ENCODE measurements at regions of chr2 and their contacts with region 1.

Region 1: DNA sequence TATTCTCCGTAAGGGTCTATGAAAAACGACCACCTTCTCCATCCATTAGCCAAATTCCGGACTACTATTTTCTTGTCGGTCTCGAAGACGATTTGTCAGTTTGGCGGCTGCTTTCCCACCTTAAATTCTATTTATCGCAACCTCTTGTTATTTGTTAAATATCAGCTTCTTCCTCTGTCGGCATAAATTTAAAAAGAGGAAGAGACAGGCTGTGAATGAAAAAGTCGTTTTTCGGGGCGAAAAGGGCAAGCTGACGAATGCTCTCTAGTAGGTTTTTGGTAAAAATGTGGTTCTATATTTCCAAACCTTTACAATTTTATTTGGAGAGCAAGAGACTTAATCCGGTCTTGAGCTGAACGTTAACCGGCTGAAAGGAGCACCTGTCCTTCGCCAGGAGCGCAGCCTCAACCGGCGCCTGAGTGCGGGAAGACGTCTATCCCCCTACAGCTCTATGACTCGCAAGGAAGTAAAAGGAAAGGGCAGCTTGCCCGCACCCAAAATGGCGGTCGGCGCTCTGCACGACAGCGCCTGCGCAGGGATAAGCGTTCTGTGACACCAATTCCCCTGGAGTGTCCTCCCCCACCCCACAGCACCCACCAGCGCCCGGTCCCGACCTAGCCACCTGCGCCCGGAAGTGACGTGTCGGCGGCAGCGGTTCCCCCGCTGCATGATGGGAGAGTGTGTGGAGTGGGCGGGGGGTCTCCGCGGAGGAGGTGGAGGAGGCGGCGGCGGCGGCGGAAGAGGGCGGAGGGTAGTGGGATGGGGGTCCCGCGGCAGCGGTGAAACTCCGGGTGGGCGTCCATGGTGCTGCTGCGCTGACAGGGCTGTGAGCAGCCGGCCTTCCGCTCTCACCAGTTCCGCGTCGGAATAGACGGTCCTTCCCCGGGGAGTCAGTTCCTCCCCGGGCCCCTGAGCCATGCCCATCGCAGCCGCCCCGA is at the start of gene AFTPH:
- DNase-seq: peak; percentile 96 to 100 (median 99)
- ATAC-seq: peak; percentile 98
- H3K4me3 ChIP-seq: peak within 1 kb of the TSS; percentile 99
- H3K4me3 Mint-ChIP-seq: peak within 1 kb of the TSS; percentile 94 to 100 (median 99)
- H3K27ac ChIP-seq: peak within 1 kb of the TSS; percentile 85
- H3K27ac Mint-ChIP-seq: peak within 1 kb of the TSS; percentile 93 to 99 (median 99)
- H3K4me1 ChIP-seq: peaks cover 22 to 25% of the 10 kb centered on the region in 2 donors
- H3K4me1 Mint-ChIP-seq: peaks cover 10 to 51% (median 43%) of the 10 kb centered on the region in 7 donors
- H3K27me3 ChIP-seq: no peaks in the 10 kb centered on the region
- H3K27me3 Mint-ChIP-seq: peaks cover 0 to 12% (median 0%) of the 10 kb centered on the region in 5 donors
- total RNA-seq, gene AFTPH: 25.2 to 46.2 (median 37.0) TPM

Region 2: DNA sequence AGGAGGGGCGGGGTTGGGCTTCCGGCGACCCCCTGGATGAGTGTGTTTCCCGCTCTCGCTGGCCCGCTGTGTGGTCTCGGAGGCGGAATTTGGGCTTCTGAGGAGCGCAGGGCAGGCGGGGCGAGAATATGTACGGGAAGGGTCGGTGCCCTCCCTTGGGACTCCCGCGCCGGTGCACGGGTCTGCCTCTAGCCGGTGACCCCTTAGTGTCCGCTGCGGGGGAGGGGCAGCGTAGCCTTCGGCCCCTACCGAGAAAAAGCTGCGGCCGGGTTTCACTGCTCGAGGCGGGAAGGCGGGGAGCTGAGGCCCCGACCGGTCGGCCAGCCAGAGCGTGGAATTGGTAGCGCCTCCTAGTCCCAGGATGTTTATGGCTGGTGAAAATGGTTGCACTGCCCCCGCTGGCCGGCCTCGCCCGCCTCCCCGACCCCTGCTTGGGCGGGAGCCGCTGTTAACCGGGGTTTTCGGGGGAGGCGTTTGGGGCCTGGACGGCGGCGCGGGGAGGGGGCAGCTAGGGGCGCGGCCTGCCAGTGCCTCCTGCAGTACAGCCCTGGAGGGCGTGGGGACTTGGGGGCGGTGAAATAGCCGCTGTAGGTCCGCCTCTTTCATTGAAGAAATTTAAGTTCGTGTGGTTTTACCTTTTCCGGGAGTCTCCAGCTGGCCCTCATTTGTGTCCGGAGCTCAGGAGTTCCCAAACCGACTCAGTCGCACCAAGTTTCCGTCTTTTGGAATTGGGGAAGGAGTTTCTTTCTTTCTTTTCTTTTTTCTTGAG is 682.5 kb before region 1 on chr2 and contains the start of gene UGP2:
- CTCF ChIA-PET with region 1: no interaction called
- POLR2A ChIA-PET with region 1: no interaction called
- intact Hi-C with region 1: loop called in 1 of 2 experiments (anchors 1 kb)
- DNase-seq: peak; percentile 68 to 89 (median 83)
- ATAC-seq: peak; percentile 77
- H3K4me3 ChIP-seq: peak within 1 kb of the TSS; percentile 82
- H3K4me3 Mint-ChIP-seq: peak within 1 kb of the TSS; percentile 97 to 100 (median 99)
- H3K27ac ChIP-seq: peak within 1 kb of the TSS; percentile 90
- H3K27ac Mint-ChIP-seq: peak within 1 kb of the TSS; percentile 95 to 99 (median 97)
- H3K4me1 ChIP-seq: peaks cover 5 to 24% of the 10 kb centered on the region in 2 donors
- H3K4me1 Mint-ChIP-seq: peaks cover 27 to 60% (median 53%) of the 10 kb centered on the region in 7 donors
- H3K27me3 ChIP-seq: no peaks in the 10 kb centered on the region
- H3K27me3 Mint-ChIP-seq: peaks cover 0 to 14% (median 0%) of the 10 kb centered on the region in 5 donors
- total RNA-seq, gene UGP2: 69.5 to 134 (median 92.4) TPM

Region 3: DNA sequence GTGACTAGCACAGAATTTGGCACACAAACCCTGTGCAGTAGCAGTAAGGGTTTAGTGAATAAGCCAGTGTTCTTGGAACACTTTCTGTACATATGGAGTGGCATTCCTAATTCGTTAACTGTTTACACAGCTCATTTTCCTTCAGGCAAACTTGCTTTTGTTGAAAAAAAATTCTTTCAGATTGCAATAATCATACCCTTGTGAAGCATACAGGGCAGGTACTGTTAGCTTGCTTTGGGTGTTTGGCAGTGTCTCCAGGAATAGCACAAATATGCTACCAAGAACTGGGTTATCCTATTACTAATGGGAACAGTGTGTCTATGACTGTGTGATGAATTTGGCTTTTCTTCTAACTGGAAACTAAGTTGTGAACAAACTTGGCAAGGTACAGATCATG is 648.8 kb before region 1 on chr2:
- CTCF ChIA-PET with region 1: no interaction called
- POLR2A ChIA-PET with region 1: no interaction called
- intact Hi-C with region 1: no loop called
- DNase-seq: no peak
- ATAC-seq: no peak
- H3K4me3 ChIP-seq: no peak overlapping the region
- H3K4me3 Mint-ChIP-seq: no peak overlapping the region
- H3K27ac ChIP-seq: no peak overlapping the region
- H3K27ac Mint-ChIP-seq: peak overlapping the region in 5 of 9 donors; percentile 5 to 74 (median 26)
- H3K4me1 ChIP-seq: no peaks in the 10 kb centered on the region
- H3K4me1 Mint-ChIP-seq: peaks cover 17 to 70% (median 54%) of the 10 kb centered on the region in 7 donors
- H3K27me3 ChIP-seq: no peaks in the 10 kb centered on the region
- H3K27me3 Mint-ChIP-seq: no peaks in the 10 kb centered on the region

Region 4: GRCh38 chr2:64538764-64539433 is 15.0 kb after region 1 on chr2:
- CTCF ChIA-PET with region 1: interaction called, 4 read pairs
- POLR2A ChIA-PET with region 1: interaction called, 5 read pairs
- intact Hi-C with region 1: loop called (anchors 1 to 2 kb)
- DNase-seq: no peak
- ATAC-seq: no peak
- H3K4me3 ChIP-seq: no peak overlapping the region
- H3K4me3 Mint-ChIP-seq: no peak overlapping the region
- H3K27ac ChIP-seq: no peak overlapping the region
- H3K27ac Mint-ChIP-seq: no peak overlapping the region
- H3K4me1 ChIP-seq: peaks cover 4 to 12% of the 10 kb centered on the region in 2 donors
- H3K4me1 Mint-ChIP-seq: peaks cover 36 to 88% (median 68%) of the 10 kb centered on the region in 7 donors
- H3K27me3 ChIP-seq: no peaks in the 10 kb centered on the region
- H3K27me3 Mint-ChIP-seq: no peaks in the 10 kb centered on the region

Region 5: DNA sequence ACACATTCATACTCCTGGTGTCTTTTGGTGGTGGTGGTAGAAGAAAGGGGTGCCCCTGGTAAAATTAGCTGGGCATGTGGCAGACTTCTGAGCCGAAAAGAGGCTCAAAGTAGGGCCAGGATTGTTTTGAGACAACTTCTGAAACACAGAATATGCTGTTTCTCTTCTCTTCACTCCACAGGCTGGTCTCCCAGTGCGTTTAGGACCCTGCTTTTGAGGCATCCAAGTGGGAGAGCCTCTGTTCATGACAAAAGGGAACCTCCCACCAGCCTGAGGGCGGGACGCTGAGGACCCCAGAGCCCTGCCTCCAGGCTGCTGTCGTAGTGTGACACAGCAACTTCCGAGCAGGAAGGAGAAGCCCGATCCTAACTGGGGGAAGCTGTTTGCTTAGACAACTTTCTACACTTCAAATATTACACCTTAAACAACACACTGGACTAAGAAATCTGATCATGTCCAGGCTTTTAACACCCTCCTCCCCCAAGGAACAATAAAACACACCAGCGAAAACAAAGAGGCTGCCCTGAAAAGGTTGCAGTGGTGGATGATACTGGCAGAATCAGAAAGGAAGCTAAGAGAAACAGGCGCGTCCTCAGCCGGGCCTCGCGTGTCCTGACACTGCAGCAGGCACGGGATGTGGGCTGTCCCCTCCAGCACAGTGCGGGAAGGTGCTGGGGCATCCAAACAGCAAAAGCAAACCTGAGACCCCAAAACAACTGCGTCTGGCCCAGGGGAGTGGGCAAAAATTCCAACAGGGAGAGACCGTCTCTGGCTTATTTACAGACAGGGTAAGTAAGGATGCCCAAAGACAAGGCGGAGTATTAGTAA is 120.5 kb after region 1 on chr2:
- CTCF ChIA-PET with region 1: interaction called, 16 read pairs
- POLR2A ChIA-PET with region 1: interaction called, 3 read pairs
- intact Hi-C with region 1: loop called (anchors 1 to 2 kb)
- DNase-seq: peak in 8 of 9 donors; percentile 48 to 57 (median 53)
- ATAC-seq: peak; percentile 79
- H3K4me3 ChIP-seq: peak overlapping the region; percentile 62
- H3K4me3 Mint-ChIP-seq: peak overlapping the region; percentile 80 to 93 (median 90)
- H3K27ac ChIP-seq: peak overlapping the region; percentile 52
- H3K27ac Mint-ChIP-seq: peak overlapping the region; percentile 34 to 94 (median 88)
- H3K4me1 ChIP-seq: peaks cover 4 to 72% of the 10 kb centered on the region in 2 donors
- H3K4me1 Mint-ChIP-seq: peaks cover 45 to 100% (median 89%) of the 10 kb centered on the region in 7 donors
- H3K27me3 ChIP-seq: no peaks in the 10 kb centered on the region
- H3K27me3 Mint-ChIP-seq: no peaks in the 10 kb centered on the region

Region 6: DNA sequence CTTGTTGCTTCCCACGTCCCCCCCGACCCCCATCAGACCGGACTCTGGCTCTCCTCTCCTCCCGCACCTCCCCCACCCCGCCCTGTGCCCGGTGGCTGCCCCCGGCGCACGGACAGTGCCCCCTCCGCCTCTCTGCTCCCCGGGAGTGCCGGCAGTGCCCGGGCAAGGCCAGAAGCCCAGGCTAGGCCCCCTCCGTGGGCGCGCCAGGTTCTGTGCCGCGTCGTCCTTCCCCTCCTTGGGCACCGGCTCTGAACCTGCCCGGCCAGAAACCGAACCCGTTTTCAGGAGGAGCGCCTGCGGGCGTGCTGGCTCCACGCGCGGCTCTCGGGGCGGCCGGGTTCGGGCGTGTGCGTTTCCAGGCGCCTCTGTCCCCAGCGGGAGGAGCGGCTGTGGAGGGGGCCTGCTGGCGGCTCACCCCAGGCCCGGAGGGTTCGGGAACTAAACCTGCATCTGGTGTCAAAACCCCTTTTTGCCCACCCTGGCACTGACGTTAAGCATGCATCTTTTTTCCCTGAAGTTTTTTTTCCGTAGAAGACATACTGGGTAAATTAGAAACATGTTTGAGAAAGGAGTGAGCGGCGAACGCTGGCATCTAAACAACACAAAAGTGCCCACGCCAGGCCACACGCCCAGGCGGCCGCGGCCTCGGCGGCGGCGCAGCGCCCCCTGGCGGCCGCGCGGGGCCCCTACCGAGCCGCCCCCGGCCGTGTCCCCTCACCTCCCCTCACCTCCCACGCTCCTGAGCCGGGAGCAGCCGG is 341.3 kb after region 1 on chr2:
- CTCF ChIA-PET with region 1: interaction called, 18 read pairs
- POLR2A ChIA-PET with region 1: no interaction called
- intact Hi-C with region 1: loop called (anchors 1 kb)
- DNase-seq: peak; percentile 30 to 82 (median 72)
- ATAC-seq: peak; percentile 87
- H3K4me3 ChIP-seq: peak overlapping the region; percentile 88
- H3K4me3 Mint-ChIP-seq: peak overlapping the region in 7 of 10 donors; percentile 72 to 86 (median 81)
- H3K27ac ChIP-seq: peak overlapping the region; percentile 40
- H3K27ac Mint-ChIP-seq: no peak overlapping the region
- H3K4me1 ChIP-seq: peaks cover 0 to 5% of the 10 kb centered on the region in 2 donors
- H3K4me1 Mint-ChIP-seq: peaks cover 0 to 5% (median 0%) of the 10 kb centered on the region in 7 donors
- H3K27me3 ChIP-seq: peaks cover 0 to 3% of the 10 kb centered on the region in 2 donors
- H3K27me3 Mint-ChIP-seq: peaks cover 0 to 17% (median 8%) of the 10 kb centered on the region in 5 donors

Region 7: DNA sequence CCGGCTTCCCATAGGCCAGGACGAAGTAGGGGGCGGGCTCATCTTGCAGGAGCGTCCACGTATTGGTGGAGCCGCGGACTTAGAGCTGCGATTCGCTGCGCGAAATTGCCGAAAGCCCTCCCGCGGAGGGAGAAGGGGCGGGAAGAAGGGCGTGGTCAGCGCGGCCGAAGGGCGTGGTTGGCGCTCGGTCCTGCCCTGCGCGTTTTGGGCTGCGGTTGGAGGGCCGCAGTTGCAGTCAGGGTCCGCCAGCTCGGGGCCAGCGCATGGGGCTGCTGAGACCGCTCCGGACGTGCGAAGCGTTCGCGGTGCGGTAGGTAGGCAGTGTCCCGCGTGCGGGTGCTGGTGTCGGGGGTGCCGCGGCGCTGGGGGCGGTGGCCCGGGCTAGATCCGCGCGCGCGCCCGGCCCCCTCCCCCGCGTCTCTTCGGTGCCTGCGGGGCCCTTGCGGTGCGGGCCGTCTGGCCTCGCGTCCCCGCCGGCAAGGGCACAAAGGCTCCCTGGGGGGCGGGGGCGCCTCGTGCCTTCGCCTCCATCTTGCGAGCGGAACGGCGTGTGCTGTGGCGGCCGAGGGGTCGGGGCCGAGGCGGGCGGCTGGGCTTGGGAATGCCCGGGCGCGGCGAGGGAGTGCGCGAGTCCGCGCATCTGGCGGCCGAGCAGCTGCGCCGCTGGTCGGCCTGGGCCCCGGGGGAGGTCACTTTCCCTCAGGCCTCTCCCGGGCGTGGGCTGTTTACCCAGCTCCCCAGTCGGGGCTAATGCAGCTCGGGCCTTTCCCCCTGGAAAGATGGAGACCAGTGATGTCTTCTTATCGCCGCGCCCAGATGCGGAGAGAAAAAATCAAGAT is 532.5 kb after region 1 on chr2 and contains the start of gene CEP68:
- CTCF ChIA-PET with region 1: no interaction called
- POLR2A ChIA-PET with region 1: interaction called, 3 read pairs
- intact Hi-C with region 1: loop called (anchors 1 kb)
- DNase-seq: peak; percentile 88 to 96 (median 95)
- ATAC-seq: peak; percentile 96
- H3K4me3 ChIP-seq: peak within 1 kb of the TSS; percentile 54
- H3K4me3 Mint-ChIP-seq: peak within 1 kb of the TSS; percentile 79 to 99 (median 94)
- H3K27ac ChIP-seq: peak within 1 kb of the TSS; percentile 76
- H3K27ac Mint-ChIP-seq: peak within 1 kb of the TSS; percentile 84 to 97 (median 90)
- H3K4me1 ChIP-seq: peaks cover 10 to 42% of the 10 kb centered on the region in 2 donors
- H3K4me1 Mint-ChIP-seq: peaks cover 41 to 81% (median 61%) of the 10 kb centered on the region in 7 donors
- H3K27me3 ChIP-seq: no peaks in the 10 kb centered on the region
- H3K27me3 Mint-ChIP-seq: peaks cover 0 to 2% (median 0%) of the 10 kb centered on the region in 5 donors
- total RNA-seq, gene CEP68: 8.5 to 52.0 (median 20.8) TPM

Region 8: GRCh38 chr2:65576861-65577601 is 1053.1 kb after region 1 on chr2:
- CTCF ChIA-PET with region 1: interaction called, 4 read pairs
- POLR2A ChIA-PET with region 1: no interaction called
- intact Hi-C with region 1: loop called in 1 of 2 experiments (anchors 1 kb)
- DNase-seq: no peak
- ATAC-seq: no peak
- H3K4me3 ChIP-seq: no peak overlapping the region
- H3K4me3 Mint-ChIP-seq: no peak overlapping the region
- H3K27ac ChIP-seq: no peak overlapping the region
- H3K27ac Mint-ChIP-seq: peak overlapping the region in 1 of 9 donors; percentile 9
- H3K4me1 ChIP-seq: no peaks in the 10 kb centered on the region
- H3K4me1 Mint-ChIP-seq: peaks cover 0 to 5% (median 4%) of the 10 kb centered on the region in 7 donors
- H3K27me3 ChIP-seq: no peaks in the 10 kb centered on the region
- H3K27me3 Mint-ChIP-seq: peaks cover 5 to 16% (median 11%) of the 10 kb centered on the region in 5 donors